WTC11 (cell line): ENCODE measurements at regions of chr9 and their contacts with region 1.

Region 1: GRCh38 chr9:98315551-98316060 is 60.2 kb upstream of the TBC1D2 start:
- DNase-seq: peak; percentile 96
- ATAC-seq: peak; percentile 96
- H3K4me3 Mint-ChIP-seq: no peak overlapping the region
- H3K27ac Mint-ChIP-seq: no peak overlapping the region
- H3K4me1 Mint-ChIP-seq: peaks cover 18% of the 10 kb centered on the region
- H3K27me3 Mint-ChIP-seq: no peaks in the 10 kb centered on the region
- CTCF ChIP-seq: peak; percentile 86

Region 2: GRCh38 chr9:98523231-98523896 is 207.8 kb after region 1 on chr9:
- CTCF ChIA-PET with region 1: interaction called, 12 read pairs
- POLR2A ChIA-PET with region 1: no interaction called
- DNase-seq: peak; percentile 40
- ATAC-seq: peak; percentile 88
- H3K4me3 Mint-ChIP-seq: no peak overlapping the region
- H3K27ac Mint-ChIP-seq: no peak overlapping the region
- H3K4me1 Mint-ChIP-seq: peaks cover 3% of the 10 kb centered on the region; the same call in 1 of the 2 replicates
- H3K27me3 Mint-ChIP-seq: no peaks in the 10 kb centered on the region
- CTCF ChIP-seq: no peak